Activated B cell treated with CpG ODN at 0.5 μM for 24 hours (primary cell): ENCODE measurements at regions of chr5 and their contacts with region 1.

Region 1: GRCh38 chr5:81506900-81507588 is 113.1 kb upstream of the ACOT12 start:
- DNase-seq: no peak
- ATAC-seq: peak; percentile 100
- H3K4me3 Mint-ChIP-seq: no peak overlapping the region
- H3K27ac Mint-ChIP-seq: no peak overlapping the region
- H3K4me1 Mint-ChIP-seq: peaks cover 6% of the 10 kb centered on the region
- H3K27me3 Mint-ChIP-seq: no peaks in the 10 kb centered on the region
- CTCF ChIP-seq: no peak

Region 2: GRCh38 chr5:81425569-81425968 is 81.5 kb before region 1 on chr5:
- CTCF ChIA-PET with region 1: interaction called, 4 read pairs
- POLR2A ChIA-PET with region 1: no interaction called
- intact Hi-C with region 1: loop called (anchors 5 kb)
- DNase-seq: no peak
- ATAC-seq: peak; percentile 50
- H3K4me3 Mint-ChIP-seq: no peak overlapping the region
- H3K27ac Mint-ChIP-seq: no peak overlapping the region
- H3K4me1 Mint-ChIP-seq: peaks cover 2% of the 10 kb centered on the region
- H3K27me3 Mint-ChIP-seq: no peaks in the 10 kb centered on the region
- CTCF ChIP-seq: peak; percentile 41

Region 3: GRCh38 chr5:81469676-81470075 is 37.4 kb before region 1 on chr5:
- CTCF ChIA-PET with region 1: no interaction called
- POLR2A ChIA-PET with region 1: no interaction called
- intact Hi-C with region 1: no loop called
- DNase-seq: no peak
- ATAC-seq: no peak
- H3K4me3 Mint-ChIP-seq: no peak overlapping the region
- H3K27ac Mint-ChIP-seq: no peak overlapping the region
- H3K4me1 Mint-ChIP-seq: no peaks in the 10 kb centered on the region
- H3K27me3 Mint-ChIP-seq: no peaks in the 10 kb centered on the region
- CTCF ChIP-seq: no peak

Region 4: DNA sequence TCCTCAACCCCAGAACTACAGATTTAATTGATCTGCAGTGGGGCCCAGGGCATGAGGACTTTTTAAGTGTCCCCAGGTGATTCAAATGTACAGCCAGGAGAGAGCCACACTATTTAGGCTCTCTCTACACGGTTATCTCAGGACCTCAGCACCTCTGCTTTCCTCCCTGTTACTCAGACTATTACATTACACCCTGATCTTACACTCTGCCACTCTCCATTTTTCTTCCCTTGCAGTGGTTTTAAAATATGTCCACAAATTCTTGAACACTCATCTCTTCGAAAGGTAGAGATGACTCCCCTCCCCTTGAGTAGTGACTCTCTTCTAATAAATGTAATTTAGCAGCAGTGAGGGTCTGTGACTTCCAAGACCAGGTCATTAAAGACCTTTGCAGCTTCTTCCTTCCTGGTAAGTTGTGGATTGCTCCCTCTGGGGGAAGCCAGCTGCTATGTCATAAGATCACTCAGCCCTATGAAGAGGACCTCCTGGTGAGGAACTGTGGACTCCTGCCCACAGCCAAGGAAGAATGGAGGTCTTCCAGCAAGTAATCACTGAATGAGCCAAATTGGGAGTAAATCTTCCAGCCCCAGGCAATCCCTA is 331.4 kb after region 1 on chr5:
- CTCF ChIA-PET with region 1: interaction called, 16 read pairs
- POLR2A ChIA-PET with region 1: no interaction called
- intact Hi-C with region 1: loop called (anchors 1 kb)
- DNase-seq: no peak
- ATAC-seq: peak; percentile 73
- H3K4me3 Mint-ChIP-seq: no peak overlapping the region
- H3K27ac Mint-ChIP-seq: no peak overlapping the region
- H3K4me1 Mint-ChIP-seq: peaks cover 2% of the 10 kb centered on the region
- H3K27me3 Mint-ChIP-seq: no peaks in the 10 kb centered on the region
- CTCF ChIP-seq: no peak

Region 5: DNA sequence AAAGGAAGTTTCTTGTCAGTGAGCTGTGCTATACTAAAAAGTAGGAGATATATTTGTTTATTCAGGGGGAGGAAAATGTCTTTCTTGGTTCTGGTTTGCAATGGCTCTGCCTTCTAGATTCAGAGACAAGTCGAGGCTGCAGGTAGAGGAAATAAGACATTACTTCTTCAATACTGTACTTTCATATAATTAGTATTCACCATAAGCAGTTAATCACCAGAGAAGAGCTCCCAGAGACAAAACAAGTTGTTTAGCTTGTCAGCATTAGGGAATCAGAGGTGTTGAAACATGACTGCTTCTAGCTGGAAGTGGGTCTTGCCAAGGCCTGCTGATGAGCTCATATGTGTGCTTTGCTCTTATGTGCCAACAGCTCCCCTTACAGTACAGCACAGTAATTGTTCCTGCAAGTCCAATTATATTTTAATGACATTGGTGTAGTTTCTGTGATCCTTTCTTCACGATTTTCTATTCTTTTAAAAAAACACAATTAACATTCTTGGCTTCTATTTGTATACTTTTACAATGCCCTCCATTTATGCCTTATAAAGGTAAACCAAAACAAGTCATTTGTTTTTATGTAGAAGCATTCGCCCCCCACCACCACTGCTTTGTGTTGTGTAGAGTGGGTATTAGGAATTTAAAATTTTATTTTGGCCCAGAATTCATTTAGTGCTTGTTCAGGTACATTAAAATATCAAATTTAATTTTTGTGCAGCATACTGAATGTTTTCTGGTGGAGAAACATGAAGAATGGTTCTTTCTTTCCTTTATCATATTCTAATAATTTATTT is 658.9 kb after region 1 on chr5:
- CTCF ChIA-PET with region 1: interaction called, 16 read pairs
- POLR2A ChIA-PET with region 1: no interaction called
- intact Hi-C with region 1: loop called (anchors 1 kb)
- DNase-seq: no peak
- ATAC-seq: peak; percentile 84
- H3K4me3 Mint-ChIP-seq: no peak overlapping the region
- H3K27ac Mint-ChIP-seq: no peak overlapping the region
- H3K4me1 Mint-ChIP-seq: peaks cover 3% of the 10 kb centered on the region
- H3K27me3 Mint-ChIP-seq: no peaks in the 10 kb centered on the region
- CTCF ChIP-seq: no peak

Region 6: GRCh38 chr5:82174128-82174918 is 667.3 kb after region 1 on chr5:
- CTCF ChIA-PET with region 1: interaction called, 3 read pairs
- POLR2A ChIA-PET with region 1: no interaction called
- intact Hi-C with region 1: loop called (anchors 2 kb)
- DNase-seq: peak; percentile 46
- ATAC-seq: peak; percentile 89
- H3K4me3 Mint-ChIP-seq: peak overlapping the region; percentile 12
- H3K27ac Mint-ChIP-seq: peak overlapping the region; percentile 69
- H3K4me1 Mint-ChIP-seq: peaks cover 20% of the 10 kb centered on the region
- H3K27me3 Mint-ChIP-seq: no peaks in the 10 kb centered on the region
- CTCF ChIP-seq: no peak

Region 7: DNA sequence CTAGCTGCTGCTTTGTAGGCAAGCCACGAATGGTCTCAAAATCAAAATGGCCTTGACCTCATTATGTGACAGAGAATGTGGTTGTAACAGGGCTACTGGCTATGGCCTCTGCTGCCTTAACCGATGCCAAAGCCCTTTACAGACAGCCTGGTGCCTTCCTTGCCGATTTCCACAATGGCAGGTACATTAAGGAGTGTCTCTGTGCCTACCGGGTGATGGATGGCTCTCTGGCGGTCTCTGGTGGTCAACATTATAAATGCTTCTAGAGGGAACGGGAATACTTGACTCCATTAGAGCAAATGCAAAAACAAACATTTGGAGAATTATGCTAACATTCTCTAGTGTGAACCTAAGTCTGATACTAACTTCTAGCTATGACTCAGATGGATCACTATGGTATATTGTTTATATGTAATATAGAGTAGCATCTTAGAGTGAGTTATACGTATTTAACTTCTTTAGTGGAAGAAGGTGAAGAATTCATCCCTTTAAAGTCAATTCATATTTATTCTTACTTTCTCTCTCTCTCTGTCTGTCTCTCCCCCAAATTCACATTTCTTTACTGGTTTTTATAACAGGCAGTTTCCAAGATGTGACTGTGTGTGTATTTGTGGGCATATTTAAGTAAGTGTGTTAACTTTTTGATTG is 718.6 kb after region 1 on chr5:
- CTCF ChIA-PET with region 1: interaction called, 11 read pairs
- POLR2A ChIA-PET with region 1: no interaction called
- intact Hi-C with region 1: loop called (anchors 1 kb)
- DNase-seq: peak; percentile 33
- ATAC-seq: peak; percentile 89
- H3K4me3 Mint-ChIP-seq: no peak overlapping the region
- H3K27ac Mint-ChIP-seq: no peak overlapping the region
- H3K4me1 Mint-ChIP-seq: peaks cover 3% of the 10 kb centered on the region
- H3K27me3 Mint-ChIP-seq: no peaks in the 10 kb centered on the region
- CTCF ChIP-seq: peak; percentile 60

Region 8: GRCh38 chr5:82278095-82278918 is 771.3 kb after region 1 on chr5 and contains the start of gene RPS23:
- CTCF ChIA-PET with region 1: no interaction called
- POLR2A ChIA-PET with region 1: no interaction called
- intact Hi-C with region 1: loop called (anchors 5 kb)
- DNase-seq: peak; percentile 79
- ATAC-seq: peak; percentile 92
- H3K4me3 Mint-ChIP-seq: peak within 1 kb of the TSS; percentile 96
- H3K27ac Mint-ChIP-seq: peak within 1 kb of the TSS; percentile 99
- H3K4me1 Mint-ChIP-seq: peaks cover 44% of the 10 kb centered on the region
- H3K27me3 Mint-ChIP-seq: no peaks in the 10 kb centered on the region
- CTCF ChIP-seq: no peak
- total RNA-seq, gene RPS23: 4,125 and 4,753 TPM in 2 replicates